ENCODE measurements at regions of chr9 and their contacts with region 1.

Region 1: DNA sequence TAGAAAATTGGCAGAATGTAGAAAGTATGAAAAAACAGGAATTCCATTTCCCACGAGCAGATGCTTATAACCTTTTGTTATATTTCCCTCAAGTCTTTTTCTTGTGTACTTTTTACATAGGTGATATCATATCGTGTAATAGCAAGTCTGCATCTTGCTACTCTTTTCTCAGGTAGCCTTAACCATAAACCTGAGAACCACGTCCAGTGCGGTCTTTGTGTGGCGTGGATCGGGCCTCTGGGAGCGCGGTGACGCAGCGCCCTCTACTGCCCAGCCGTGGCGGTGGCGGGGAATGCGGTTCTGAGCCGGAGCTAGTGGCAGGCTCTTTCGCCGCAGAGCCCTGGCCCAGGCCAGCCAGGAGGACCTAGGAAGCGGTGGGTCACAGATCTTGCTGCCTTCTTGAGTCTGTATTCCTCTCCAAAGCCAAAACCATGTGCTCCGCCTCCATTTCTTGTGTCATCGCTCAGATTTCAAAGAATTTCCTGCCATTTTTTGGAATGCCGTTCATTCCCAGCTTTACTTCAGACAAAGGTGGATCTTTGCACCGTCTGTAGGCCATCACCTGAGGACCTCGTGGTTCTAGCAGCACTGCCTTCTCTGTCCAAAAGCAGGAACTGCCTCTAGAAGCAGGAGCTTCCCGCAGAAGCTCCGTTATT is 71.9 kb downstream of the MVB12B start:
- DNase-seq: peak; percentile 87
- H3K27ac ChIP-seq: no peak overlapping the region
- CTCF ChIP-seq: peak; percentile 100

Region 2: GRCh38 chr9:125407974-125408900 is 990.3 kb before region 1 on chr9:
- CTCF ChIA-PET with region 1: interaction called, 18 read pairs
- POLR2A ChIA-PET with region 1: no interaction called
- DNase-seq: peak; percentile 95
- H3K27ac ChIP-seq: no peak overlapping the region
- CTCF ChIP-seq: peak; percentile 98

Region 3: GRCh38 chr9:126301985-126302603 is 96.4 kb before region 1 on chr9:
- CTCF ChIA-PET with region 1: interaction called, 24 read pairs
- POLR2A ChIA-PET with region 1: no interaction called
- DNase-seq: peak; percentile 79
- H3K27ac ChIP-seq: no peak overlapping the region
- CTCF ChIP-seq: peak; percentile 80

Region 4: GRCh38 chr9:126386088-126386487 is 12.4 kb before region 1 on chr9:
- CTCF ChIA-PET with region 1: interaction called, 14 read pairs
- POLR2A ChIA-PET with region 1: no interaction called
- DNase-seq: peak; percentile 60
- H3K27ac ChIP-seq: no peak overlapping the region
- CTCF ChIP-seq: 0 out of 2 replicates have a peak, but pooled peaks have one; percentile 12

Measured in RWPE1 (cell line).